Astrocyte of the spinal cord (primary cell): ENCODE measurements at regions of chr19 and their contacts with region 1.

Region 1: DNA sequence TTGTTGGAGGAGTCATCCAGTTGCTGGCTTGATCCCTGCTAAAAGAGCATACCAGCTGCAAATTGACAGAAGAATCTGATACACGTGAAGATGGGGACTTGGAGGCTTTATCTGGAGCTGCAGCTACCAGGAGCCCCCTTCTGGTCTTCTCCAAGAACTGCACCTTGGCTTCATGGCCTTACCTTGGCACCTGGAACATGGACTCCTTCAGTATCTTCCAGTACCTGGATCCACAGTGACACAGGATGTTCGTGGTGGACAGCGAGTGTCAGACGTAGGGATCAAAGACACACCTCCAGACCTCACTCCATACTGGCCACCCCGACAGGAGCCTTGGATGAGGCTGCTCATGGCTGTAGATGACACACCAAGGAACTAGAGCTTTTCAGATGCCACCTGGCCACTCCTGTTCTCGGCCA is 9.9 kb upstream of the ACSBG2 start:
- DNase-seq: peak; percentile 70
- H3K4me3 ChIP-seq: no peak overlapping the region
- CTCF ChIP-seq: peak; percentile 98

Region 2: GRCh38 chr19:5926641-5927440 is 198.7 kb before region 1 on chr19:
- in situ Hi-C with region 1: no loop called
- DNase-seq: peak; percentile 13
- H3K4me3 ChIP-seq: no peak overlapping the region
- CTCF ChIP-seq: no peak

Region 3: GRCh38 chr19:6005321-6006069 is 120.1 kb before region 1 on chr19:
- in situ Hi-C with region 1: no loop called
- DNase-seq: no peak
- H3K4me3 ChIP-seq: no peak overlapping the region
- CTCF ChIP-seq: no peak

Region 4: GRCh38 chr19:6048808-6049405 is 76.7 kb before region 1 on chr19:
- in situ Hi-C with region 1: loop called (anchors 25 kb)
- DNase-seq: peak; percentile 71
- H3K4me3 ChIP-seq: no peak overlapping the region
- CTCF ChIP-seq: peak; percentile 89